ENCODE measurements at regions of chr9 and their contacts with region 1.

Region 1: DNA sequence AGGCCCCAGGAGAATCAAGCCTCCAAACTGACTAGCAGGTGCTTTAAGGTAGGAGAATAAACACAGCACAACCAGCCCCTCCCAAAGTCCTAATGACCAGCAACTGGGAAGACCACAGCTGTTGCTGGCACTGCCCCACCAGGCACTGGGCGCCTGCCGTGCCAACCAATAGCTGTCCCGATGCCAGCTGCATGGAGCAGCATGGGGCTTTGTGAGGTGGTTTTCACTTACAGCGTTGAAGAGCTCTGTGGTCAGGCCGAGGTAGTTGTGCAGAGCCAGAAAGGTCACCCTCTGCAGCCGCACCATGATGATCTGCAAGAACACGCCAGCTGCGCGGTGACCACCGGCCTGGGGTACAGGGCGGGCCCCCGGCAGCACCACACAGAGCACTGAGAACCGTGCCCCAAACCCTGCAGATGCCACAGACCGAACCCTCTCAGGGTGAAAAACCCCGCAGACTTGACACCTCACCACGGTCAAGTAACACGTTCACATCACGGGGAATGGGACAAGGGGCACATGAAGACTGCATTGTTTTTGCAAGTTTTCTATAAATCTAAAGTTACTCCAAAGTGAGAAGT is 28.7 kb downstream of the PNPLA7 start:
- DNase-seq: peak; percentile 81 to 95 (median 91)
- ATAC-seq: peak; percentile 94 to 95 (median 95)
- H3K4me3 ChIP-seq: no peak overlapping the region
- H3K27ac ChIP-seq: peak overlapping the region in 3 of 4 donors; percentile 2 to 70 (median 70)
- H3K4me1 ChIP-seq: peaks cover 6 to 15% (median 9%) of the 10 kb centered on the region in 3 donors
- H3K27me3 ChIP-seq: no peaks in the 10 kb centered on the region
- CTCF ChIP-seq: no peak

Region 2: GRCh38 chr9:137200311-137201204 is 320.9 kb before region 1 on chr9 and contains the start of gene TPRN:
- intact Hi-C with region 1: no loop called
- DNase-seq: peak; percentile 98 to 100 (median 100)
- ATAC-seq: peak; percentile 75 to 89 (median 80)
- H3K4me3 ChIP-seq: peak within 1 kb of the TSS; percentile 48 to 80 (median 60)
- H3K27ac ChIP-seq: peak within 1 kb of the TSS; percentile 83 to 90 (median 85)
- H3K4me1 ChIP-seq: peaks cover 12 to 33% (median 15%) of the 10 kb centered on the region in 3 donors
- H3K27me3 ChIP-seq: no peaks in the 10 kb centered on the region
- CTCF ChIP-seq: no peak
- total RNA-seq, gene TPRN: 50.3 to 110 (median 74.8) TPM

Region 3: GRCh38 chr9:137277329-137278041 is 244.0 kb before region 1 on chr9 and contains the start of gene TOR4A:
- intact Hi-C with region 1: loop called in 1 of 3 experiments (anchors 10 kb)
- DNase-seq: peak; percentile 65 to 89 (median 77)
- ATAC-seq: peak; percentile 55 to 78 (median 77)
- H3K4me3 ChIP-seq: peak within 1 kb of the TSS; percentile 10 to 45 (median 28)
- H3K27ac ChIP-seq: peak within 1 kb of the TSS; percentile 76 to 91 (median 86)
- H3K4me1 ChIP-seq: peaks cover 0 to 10% (median 8%) of the 10 kb centered on the region in 3 donors
- H3K27me3 ChIP-seq: no peaks in the 10 kb centered on the region
- CTCF ChIP-seq: no peak
- total RNA-seq, gene TOR4A: 2.5 to 6.8 (median 4.3) TPM

Region 4: GRCh38 chr9:137295238-137295811 is 226.2 kb before region 1 on chr9:
- intact Hi-C with region 1: loop called in 1 of 3 experiments (anchors 10 kb)
- DNase-seq: peak; percentile 36 to 86 (median 69)
- ATAC-seq: peak; percentile 23 to 57 (median 42)
- H3K4me3 ChIP-seq: peak overlapping the region in 3 of 4 donors; percentile 30 to 52 (median 49)
- H3K27ac ChIP-seq: peak overlapping the region; percentile 40 to 93 (median 84)
- H3K4me1 ChIP-seq: peaks cover 18 to 37% (median 22%) of the 10 kb centered on the region in 3 donors
- H3K27me3 ChIP-seq: no peaks in the 10 kb centered on the region
- CTCF ChIP-seq: peak; percentile 13 to 58 (median 42)

Region 5: DNA sequence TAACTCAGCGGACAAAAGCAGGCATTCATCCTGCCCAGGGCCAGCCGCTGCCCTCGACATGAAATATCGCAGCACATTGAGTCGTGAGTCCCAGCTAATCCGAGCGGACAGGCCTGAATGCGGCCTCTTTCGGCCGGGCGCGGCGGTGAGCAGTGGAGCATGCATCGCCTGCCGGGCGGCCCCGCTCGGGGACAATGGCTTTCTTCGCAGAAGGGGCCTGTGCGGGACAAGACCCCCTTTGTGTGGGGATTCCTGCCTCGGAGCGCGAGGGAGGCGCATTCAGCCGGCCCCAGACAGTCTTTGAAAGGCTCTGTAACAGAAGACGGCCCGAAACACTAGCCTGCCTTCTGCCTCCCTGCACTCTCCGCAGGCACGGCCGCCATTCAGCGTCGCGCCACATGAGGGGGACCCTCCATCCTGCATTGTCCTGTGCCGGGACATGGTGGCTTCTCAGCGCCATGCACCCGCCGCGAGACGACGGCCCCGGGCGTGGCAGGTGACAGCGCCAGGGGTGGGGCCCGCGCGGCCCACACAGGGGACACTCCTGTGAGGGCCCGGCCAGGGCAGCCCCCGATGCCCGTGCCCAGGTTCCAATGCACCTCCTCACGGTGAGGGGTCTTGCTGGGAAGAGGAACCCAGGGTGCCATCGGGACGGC is 150.5 kb before region 1 on chr9:
- intact Hi-C with region 1: no loop called
- DNase-seq: peak in 5 of 6 donors; percentile 9 to 69 (median 41)
- ATAC-seq: peak; percentile 25 to 67 (median 56)
- H3K4me3 ChIP-seq: no peak overlapping the region
- H3K27ac ChIP-seq: peak overlapping the region; percentile 8 to 42 (median 28)
- H3K4me1 ChIP-seq: no peaks in the 10 kb centered on the region
- H3K27me3 ChIP-seq: no peaks in the 10 kb centered on the region
- CTCF ChIP-seq: no peak

Region 6: GRCh38 chr9:137907776-137908175 is 386.3 kb after region 1 on chr9:
- intact Hi-C with region 1: no loop called
- DNase-seq: no peak
- ATAC-seq: no peak
- H3K4me3 ChIP-seq: no peak overlapping the region
- H3K27ac ChIP-seq: no peak overlapping the region
- H3K4me1 ChIP-seq: no peaks in the 10 kb centered on the region
- H3K27me3 ChIP-seq: no peaks in the 10 kb centered on the region
- CTCF ChIP-seq: no peak

Region 7: DNA sequence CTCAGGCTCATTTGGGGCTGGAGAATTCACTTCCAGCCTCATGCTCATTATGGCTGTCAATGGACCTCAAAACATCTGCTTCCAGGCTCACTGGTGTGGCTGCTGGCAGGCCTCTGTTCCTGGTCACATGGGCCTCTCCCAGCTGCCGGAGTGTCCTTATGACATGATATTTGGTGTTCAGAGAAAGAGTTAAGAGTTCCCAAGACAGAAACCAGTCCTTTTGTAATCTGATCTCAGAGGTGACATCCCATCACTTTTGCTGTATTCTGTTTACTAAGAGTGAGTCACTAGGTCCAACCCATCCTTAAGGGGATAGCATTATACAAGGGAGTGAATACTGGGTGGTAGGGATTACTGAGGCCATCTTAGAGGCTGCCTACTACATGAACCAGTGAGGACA is 460.7 kb after region 1 on chr9:
- intact Hi-C with region 1: no loop called
- DNase-seq: no peak
- ATAC-seq: no peak
- H3K4me3 ChIP-seq: no peak overlapping the region
- H3K27ac ChIP-seq: no peak overlapping the region
- H3K4me1 ChIP-seq: no peaks in the 10 kb centered on the region
- H3K27me3 ChIP-seq: no peaks in the 10 kb centered on the region
- CTCF ChIP-seq: no peak